ENCODE measurements at regions of chr14 and their contacts with region 1.

Region 1: DNA sequence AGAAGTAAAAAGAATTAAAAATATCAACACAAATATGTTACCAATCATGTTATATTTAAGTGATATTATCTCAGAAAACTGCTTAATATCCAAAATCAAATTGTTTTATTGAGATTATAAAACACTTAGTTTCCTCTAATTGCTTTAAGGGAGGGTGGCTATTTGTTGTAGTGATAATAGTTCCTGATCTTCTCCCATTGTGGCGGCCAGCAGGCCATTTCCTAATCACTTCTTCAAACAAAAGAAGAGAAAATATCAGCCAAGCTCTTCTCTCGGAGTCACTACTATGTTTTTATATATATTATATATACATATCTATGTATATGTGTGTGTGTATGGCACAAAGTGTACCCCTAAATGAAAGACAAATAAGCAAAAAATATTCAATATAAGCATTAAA is 31.5 kb downstream of the ERO1A start:
- DNase-seq: no peak
- ATAC-seq: no peak
- H3K4me3 ChIP-seq: no peak overlapping the region
- H3K27ac ChIP-seq: no peak overlapping the region
- H3K4me1 ChIP-seq: no peaks in the 10 kb centered on the region
- H3K27me3 ChIP-seq: no peaks in the 10 kb centered on the region
- CTCF ChIP-seq: no peak
- POLR2A ChIP-seq: no peak
- RAD21 ChIP-seq: no peak

Region 2: GRCh38 chr14:52619692-52620091 is 44.2 kb before region 1 on chr14:
- CTCF ChIA-PET with region 1: no interaction called
- POLR2A ChIA-PET with region 1: no interaction called
- dilution Hi-C with region 1: no loop called
- in situ Hi-C with region 1: no loop called
- intact Hi-C with region 1: loop called (anchors 5 kb)
- DNase-seq: no peak
- ATAC-seq: no peak
- H3K4me3 ChIP-seq: no peak overlapping the region
- H3K27ac ChIP-seq: no peak overlapping the region
- H3K4me1 ChIP-seq: no peaks in the 10 kb centered on the region
- H3K27me3 ChIP-seq: no peaks in the 10 kb centered on the region
- CTCF ChIP-seq: no peak
- POLR2A ChIP-seq: no peak
- RAD21 ChIP-seq: no peak

Region 3: DNA sequence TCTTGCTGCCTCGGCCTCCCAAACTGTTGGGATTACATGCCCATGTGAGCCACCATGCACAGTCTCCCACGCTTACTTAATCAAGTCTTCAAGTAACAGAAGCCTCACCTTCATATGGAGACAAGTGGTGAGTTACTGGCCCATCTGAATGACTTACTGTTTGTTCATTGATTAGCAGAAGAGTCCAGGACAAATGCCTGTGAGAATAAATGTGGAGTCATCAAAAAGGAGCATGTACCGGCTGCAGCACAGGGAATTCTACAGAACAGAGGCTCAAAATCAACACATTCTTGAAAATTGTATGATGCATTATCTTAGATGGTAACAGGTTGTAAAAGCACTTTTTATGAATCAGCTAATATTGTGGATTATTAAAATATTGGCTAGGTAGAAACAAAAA is 359.5 kb after region 1 on chr14:
- CTCF ChIA-PET with region 1: no interaction called
- POLR2A ChIA-PET with region 1: no interaction called
- dilution Hi-C with region 1: no loop called
- in situ Hi-C with region 1: no loop called
- intact Hi-C with region 1: no loop called
- DNase-seq: no peak
- ATAC-seq: no peak
- H3K4me3 ChIP-seq: no peak overlapping the region
- H3K27ac ChIP-seq: no peak overlapping the region
- H3K4me1 ChIP-seq: peaks cover 10% of the 10 kb centered on the region; the same call in 1 of the 2 replicates
- H3K27me3 ChIP-seq: no peaks in the 10 kb centered on the region
- CTCF ChIP-seq: no peak
- POLR2A ChIP-seq: no peak
- RAD21 ChIP-seq: no peak

Region 4: GRCh38 chr14:53478174-53478573 is 814.3 kb after region 1 on chr14:
- CTCF ChIA-PET with region 1: no interaction called
- POLR2A ChIA-PET with region 1: no interaction called
- dilution Hi-C with region 1: no loop called
- in situ Hi-C with region 1: no loop called
- intact Hi-C with region 1: no loop called
- DNase-seq: no peak
- ATAC-seq: no peak
- H3K4me3 ChIP-seq: no peak overlapping the region
- H3K27ac ChIP-seq: no peak overlapping the region
- H3K4me1 ChIP-seq: no peaks in the 10 kb centered on the region
- H3K27me3 ChIP-seq: no peaks in the 10 kb centered on the region
- CTCF ChIP-seq: no peak
- POLR2A ChIP-seq: no peak
- RAD21 ChIP-seq: no peak

Measured in IMR-90 (cell line).